ENCODE measurements at regions of chr1 and their contacts with region 1.

Region 1: GRCh38 chr1:201454608-201455007 is 14.4 kb downstream of the PHLDA3 start:
- DNase-seq: no peak
- ATAC-seq: no peak
- H3K4me3 Mint-ChIP-seq: no peak overlapping the region
- H3K27ac Mint-ChIP-seq: no peak overlapping the region
- H3K4me1 Mint-ChIP-seq: peaks cover 20% of the 10 kb centered on the region
- H3K27me3 Mint-ChIP-seq: peaks cover 15% of the 10 kb centered on the region

Region 2: DNA sequence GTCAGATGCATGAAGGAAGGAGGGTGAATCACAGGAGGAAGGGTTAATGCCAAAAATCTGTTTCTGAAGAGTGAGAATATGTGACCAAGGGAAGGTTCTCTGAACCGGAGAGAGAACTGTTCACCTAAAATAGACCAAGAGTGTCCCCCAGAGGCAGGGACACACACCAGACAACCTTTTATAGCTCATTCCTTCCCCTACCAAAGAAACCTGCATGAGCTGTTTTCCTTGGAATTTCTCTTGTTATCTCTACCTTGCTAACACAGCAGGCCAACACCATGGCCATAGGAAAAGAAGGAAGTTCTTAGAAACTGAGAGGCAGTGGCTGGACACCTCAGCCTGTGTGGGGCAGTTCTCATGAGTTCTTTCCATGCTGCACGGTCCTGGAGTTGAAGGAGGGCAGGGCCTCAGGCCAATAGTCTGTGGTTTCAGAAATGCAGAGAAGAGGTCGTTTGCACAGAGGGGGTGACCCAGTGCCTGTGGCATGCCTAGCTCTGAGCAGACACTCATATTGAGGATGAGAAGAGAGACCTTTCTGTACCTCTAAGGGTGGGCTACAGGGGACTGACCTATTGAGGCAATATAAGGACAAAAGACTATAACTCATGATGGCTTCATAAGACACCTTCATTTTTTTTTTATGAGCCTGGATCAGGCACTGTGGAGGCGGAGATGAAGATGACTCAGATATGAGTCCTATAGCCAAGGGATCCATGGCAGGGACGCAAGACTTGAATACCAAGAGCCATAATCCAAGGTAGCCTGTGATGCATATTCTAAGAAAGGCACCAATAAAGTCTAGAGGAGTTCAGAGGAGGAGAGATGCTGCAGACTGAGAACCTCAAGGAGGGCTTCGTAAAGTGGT is 224.6 kb before region 1 on chr1:
- CTCF ChIA-PET with region 1: no interaction called
- POLR2A ChIA-PET with region 1: no interaction called
- intact Hi-C with region 1: no loop called
- DNase-seq: no peak
- ATAC-seq: no peak
- H3K4me3 Mint-ChIP-seq: no peak overlapping the region
- H3K27ac Mint-ChIP-seq: no peak overlapping the region
- H3K4me1 Mint-ChIP-seq: no peaks in the 10 kb centered on the region
- H3K27me3 Mint-ChIP-seq: peaks cover 13% of the 10 kb centered on the region

Region 3: GRCh38 chr1:201506556-201507359 is 52.1 kb after region 1 on chr1 and contains the start of gene CSRP1:
- CTCF ChIA-PET with region 1: interaction called, 75 read pairs
- POLR2A ChIA-PET with region 1: no interaction called
- intact Hi-C with region 1: loop called in 1 of 2 experiments (anchors 1 kb)
- DNase-seq: peak; percentile 92
- ATAC-seq: peak; percentile 94
- H3K4me3 Mint-ChIP-seq: peak within 1 kb of the TSS; percentile 91
- H3K27ac Mint-ChIP-seq: peak within 1 kb of the TSS; percentile 89
- H3K4me1 Mint-ChIP-seq: peaks cover 31% of the 10 kb centered on the region
- H3K27me3 Mint-ChIP-seq: no peaks in the 10 kb centered on the region
- total RNA-seq, gene CSRP1: 49.2 to 50.7 TPM